ENCODE measurements at regions of chr13 and their contacts with region 1.

Region 1: GRCh38 chr13:110116072-110116487 is 190.9 kb downstream of the COL4A1 start:
- DNase-seq: peak; percentile 40 to 49
- H3K4me3 ChIP-seq: no peak overlapping the region
- H3K27ac ChIP-seq: no peak overlapping the region
- H3K4me1 ChIP-seq: no peaks in the 10 kb centered on the region
- H3K27me3 ChIP-seq: no peaks in the 10 kb centered on the region
- CTCF ChIP-seq: peak; percentile 22 to 45 (median 41)
- POLR2A ChIP-seq: no peak

Region 2: DNA sequence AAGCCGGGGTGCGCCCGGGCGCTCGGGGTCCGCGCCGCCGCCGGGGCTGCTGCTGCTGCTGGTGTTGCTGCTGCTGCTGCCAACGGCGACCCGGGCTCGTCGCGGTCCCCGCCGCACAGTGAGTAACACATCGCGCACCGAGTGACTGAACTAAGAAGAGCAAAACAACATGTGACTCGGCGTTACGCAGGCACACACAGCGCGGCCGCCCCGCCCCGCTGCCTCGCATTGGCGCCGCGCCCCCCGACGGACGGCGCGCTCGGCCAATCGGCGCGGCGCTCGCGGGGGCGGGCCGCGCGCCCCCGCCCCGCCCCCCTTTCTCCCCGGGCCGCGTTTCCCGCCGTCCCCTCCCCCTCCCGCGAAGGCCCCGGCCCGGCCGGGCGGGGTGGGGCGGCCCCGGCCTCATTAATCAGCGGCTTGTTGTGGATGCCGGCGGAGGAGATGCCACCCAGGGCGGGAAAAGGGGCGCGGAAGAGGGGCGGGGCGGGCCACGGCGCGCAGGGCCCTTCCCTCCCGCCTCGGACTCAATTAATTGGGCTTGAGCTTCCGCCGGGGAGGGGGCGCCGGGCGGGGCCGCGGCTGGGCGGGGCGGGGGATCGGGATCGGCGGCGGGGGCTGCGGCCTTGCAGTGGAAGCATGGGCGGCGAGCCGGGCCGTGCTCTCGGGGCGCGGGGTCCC is 329.5 kb before region 1 on chr13 and contains the start of gene IRS2:
- intact Hi-C with region 1: loop called (anchors 10 kb)
- DNase-seq: peak; percentile 88 to 93
- H3K4me3 ChIP-seq: peak within 1 kb of the TSS; percentile 37 to 64
- H3K27ac ChIP-seq: peak within 1 kb of the TSS; percentile 93 to 98
- H3K4me1 ChIP-seq: peaks cover 0 to 16% of the 10 kb centered on the region in 2 donors
- H3K27me3 ChIP-seq: peaks cover 0 to 5% of the 10 kb centered on the region in 2 donors
- CTCF ChIP-seq: peak in 1 of 4 experiments; percentile 39
- POLR2A ChIP-seq: peak; percentile 98 to 99
- total RNA-seq, gene IRS2: 6.5 to 20.3 (median 11.7) TPM

Measured in uterus (tissue), 4 donors.